ENCODE measurements at regions of chr19 and their contacts with region 1.

Region 1: GRCh38 chr19:33302175-33302973 is at the start of gene CEBPA:
- DNase-seq: peak in 9 of 10 donors; percentile 29 to 81 (median 69)
- H3K4me3 ChIP-seq: peak within 1 kb of the TSS; percentile 47 to 83 (median 72)
- H3K27ac ChIP-seq: peak within 1 kb of the TSS in 54 of 59 donors; percentile 6 to 90 (median 75)
- H3K27me3 ChIP-seq: peaks cover 0 to 14% (median 0%) of the 10 kb centered on the region in 45 donors
- CTCF ChIP-seq: peak in 36 of 56 donors; percentile 11 to 59 (median 36)
- total RNA-seq, gene CEBPA: 6.2 to 29.6 (median 11.6) TPM

Region 2: GRCh38 chr19:32798201-32798600 is 504.2 kb before region 1 on chr19:
- intact Hi-C with region 1: no loop called
- DNase-seq: no peak
- H3K4me3 ChIP-seq: no peak overlapping the region
- H3K27ac ChIP-seq: no peak overlapping the region
- H3K27me3 ChIP-seq: no peaks in the 10 kb centered on the region
- CTCF ChIP-seq: no peak

Region 3: DNA sequence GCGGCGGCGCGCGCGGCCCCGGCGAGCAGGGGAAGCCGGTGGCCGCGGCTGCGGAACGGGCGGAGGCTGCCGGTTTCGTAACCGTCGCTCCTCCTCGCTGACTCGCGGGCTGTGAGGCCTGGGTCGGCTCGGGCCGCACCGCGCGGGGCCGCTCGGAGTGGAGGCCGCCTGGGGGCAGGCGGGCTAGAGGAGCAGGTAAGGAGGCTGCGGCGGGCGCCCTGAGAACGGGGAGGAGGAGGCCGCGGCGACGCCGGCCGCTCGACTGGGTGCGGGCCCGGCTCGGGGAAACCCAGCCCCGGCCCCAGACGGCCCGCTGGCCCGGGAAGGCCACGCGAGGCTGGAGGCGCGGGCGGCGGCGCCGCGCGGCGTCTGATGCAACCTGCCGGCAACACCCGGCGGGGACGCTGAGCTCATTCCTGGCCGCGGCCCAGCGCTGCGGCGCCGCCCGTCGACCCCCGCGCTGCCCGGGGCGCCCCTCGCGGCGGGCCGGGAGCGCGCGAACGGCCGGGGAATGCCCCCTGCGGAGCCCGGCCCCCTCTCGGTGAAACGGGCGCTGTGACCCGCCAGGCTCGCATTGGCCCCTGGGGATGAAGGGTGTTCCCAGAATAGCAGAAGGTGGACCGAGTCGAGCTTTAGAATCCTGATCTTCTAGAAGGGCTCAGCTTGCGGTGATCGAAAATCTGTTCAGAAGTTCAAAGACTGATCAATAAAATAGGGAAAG is 71.5 kb after region 1 on chr19 and contains the start of gene CEBPG:
- intact Hi-C with region 1: loop called (anchors 2 to 5 kb)
- DNase-seq: peak in 1 of 10 donors; percentile 52
- H3K4me3 ChIP-seq: peak within 1 kb of the TSS; percentile 55 to 94 (median 80)
- H3K27ac ChIP-seq: peak within 1 kb of the TSS in 57 of 59 donors; percentile 7 to 97 (median 87)
- H3K27me3 ChIP-seq: no peaks in the 10 kb centered on the region
- CTCF ChIP-seq: peak in 7 of 56 donors; percentile 1 to 25 (median 7)
- total RNA-seq, gene CEBPG: 15.1 to 42.7 (median 26.1) TPM

Region 4: GRCh38 chr19:33388725-33389420 is 86.5 kb after region 1 on chr19:
- intact Hi-C with region 1: loop called in 1 of 2 experiments (anchors 5 kb)
- DNase-seq: peak in 3 of 10 donors; percentile 37 to 43 (median 42)
- H3K4me3 ChIP-seq: no peak overlapping the region
- H3K27ac ChIP-seq: peak overlapping the region in 37 of 59 donors; percentile 0 to 83 (median 50)
- H3K27me3 ChIP-seq: no peaks in the 10 kb centered on the region
- CTCF ChIP-seq: no peak

Region 5: GRCh38 chr19:33399091-33399744 is 96.8 kb after region 1 on chr19:
- intact Hi-C with region 1: no loop called
- DNase-seq: peak in 3 of 10 donors; percentile 16 to 23 (median 23)
- H3K4me3 ChIP-seq: no peak overlapping the region
- H3K27ac ChIP-seq: no peak overlapping the region
- H3K27me3 ChIP-seq: no peaks in the 10 kb centered on the region
- CTCF ChIP-seq: no peak